ENCODE measurements at regions of chr15 and their contacts with region 1.

Region 1: DNA sequence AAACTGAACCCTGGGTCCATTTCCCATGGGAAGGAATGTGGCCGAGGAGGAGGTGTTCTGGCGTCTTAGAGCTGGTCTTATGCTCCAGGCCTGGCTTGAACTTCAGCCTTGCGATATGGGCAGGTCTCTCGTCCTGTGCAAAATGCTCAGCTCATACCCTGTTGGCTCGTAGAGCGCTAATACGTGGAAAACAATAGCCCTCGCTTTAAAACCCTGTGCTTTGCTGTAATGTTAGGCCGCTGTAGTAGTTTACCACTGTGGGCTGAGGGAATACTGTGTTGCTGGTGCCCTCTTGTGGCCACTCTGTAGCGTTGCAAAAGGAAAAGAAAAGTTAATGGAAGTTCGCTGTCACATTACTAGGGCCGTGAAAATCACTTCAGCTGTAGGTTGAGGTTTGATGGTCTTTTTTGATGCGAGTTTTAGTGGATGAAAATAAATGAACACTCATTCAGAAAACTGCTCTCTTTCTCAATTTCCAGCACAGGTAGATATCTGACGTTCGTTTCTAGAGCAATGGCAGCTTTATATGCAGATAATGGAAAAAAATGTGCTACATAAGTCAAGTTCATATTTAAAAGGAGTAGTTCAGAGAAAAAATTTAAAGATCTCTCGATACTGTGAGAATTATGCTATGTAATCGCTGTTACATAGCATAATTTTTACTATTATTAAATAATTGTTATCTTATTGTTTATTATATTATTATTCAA is 92.9 kb downstream of the MCTP2 start:
- DNase-seq: peak; percentile 64
- CTCF ChIP-seq: peak; percentile 83

Region 2: DNA sequence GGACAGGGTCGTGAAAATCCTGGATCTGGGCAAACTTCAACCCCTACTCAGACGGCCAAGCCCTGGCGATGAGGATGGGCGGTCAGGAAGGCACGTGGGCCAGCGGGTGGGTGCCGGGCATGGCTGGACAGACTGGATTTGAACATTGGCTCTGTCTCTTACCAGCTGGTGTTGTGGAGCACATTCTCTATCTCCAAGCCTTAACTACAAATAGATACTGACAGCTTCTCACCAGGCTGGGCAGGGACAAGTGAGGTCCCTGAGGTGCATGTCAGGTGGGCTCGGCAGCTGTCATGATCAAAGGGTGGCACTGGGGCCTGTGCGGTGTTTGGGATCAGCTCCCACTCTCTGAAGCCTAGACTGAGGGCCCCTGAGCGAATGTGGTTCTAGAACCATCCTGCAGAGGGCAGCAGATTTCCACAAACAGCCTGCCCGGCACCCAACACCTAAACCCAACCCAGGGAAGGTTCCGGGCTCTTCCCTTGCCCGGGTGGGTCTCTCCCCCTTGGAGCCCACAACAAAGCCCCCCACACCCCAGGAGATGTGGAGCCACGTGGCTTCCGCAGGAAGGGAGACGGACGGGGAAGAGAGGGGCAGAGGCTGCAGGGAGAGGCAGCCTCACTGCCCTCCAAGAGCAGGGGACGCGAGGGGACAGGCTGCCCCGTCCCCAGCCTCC is 1293.7 kb before region 1 on chr15:
- CTCF ChIA-PET with region 1: interaction called, 13 read pairs
- POLR2A ChIA-PET with region 1: no interaction called
- DNase-seq: peak; percentile 87
- CTCF ChIP-seq: peak; percentile 81

Region 3: DNA sequence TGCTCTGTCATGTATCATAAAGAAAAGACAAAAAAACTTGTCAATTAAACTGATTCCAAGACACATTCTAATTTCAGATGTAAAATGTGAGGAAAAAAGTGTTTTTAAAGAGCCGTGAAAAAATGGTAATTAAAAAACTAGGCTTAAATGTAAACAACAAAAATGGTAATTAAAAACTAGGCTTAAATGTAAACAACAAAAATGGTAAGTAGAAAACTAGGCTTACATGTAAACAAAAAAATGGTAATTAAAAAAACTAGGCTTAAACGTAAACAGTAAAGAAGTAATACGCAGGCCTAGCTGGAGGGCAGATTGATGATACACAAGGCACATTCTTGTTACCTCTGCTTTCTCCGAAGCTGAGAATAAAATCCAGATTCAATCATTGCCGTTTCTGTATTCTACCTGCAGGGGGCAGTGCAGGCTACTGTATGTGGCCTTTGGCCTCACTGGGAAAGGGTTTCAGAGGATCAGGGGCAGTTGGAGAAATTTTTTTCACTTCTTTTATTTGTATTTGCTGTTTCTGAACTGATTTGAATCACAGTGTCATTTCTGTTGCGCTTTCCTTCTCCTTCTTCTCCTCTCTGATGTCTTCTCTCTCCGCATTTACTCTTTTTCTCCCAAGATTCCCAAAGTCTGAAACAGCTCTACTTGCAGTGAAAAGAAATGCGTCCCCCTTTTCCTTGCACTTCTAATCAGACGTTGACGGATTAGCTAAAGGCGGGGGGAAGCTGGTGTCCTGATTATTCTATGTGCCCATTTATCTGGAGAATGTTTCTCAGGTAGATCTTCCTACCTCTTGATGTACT is 160.1 kb before region 1 on chr15:
- CTCF ChIA-PET with region 1: interaction called, 316 read pairs
- POLR2A ChIA-PET with region 1: interaction called, 3 read pairs
- DNase-seq: peak; percentile 43
- CTCF ChIP-seq: peak; percentile 78

Region 4: DNA sequence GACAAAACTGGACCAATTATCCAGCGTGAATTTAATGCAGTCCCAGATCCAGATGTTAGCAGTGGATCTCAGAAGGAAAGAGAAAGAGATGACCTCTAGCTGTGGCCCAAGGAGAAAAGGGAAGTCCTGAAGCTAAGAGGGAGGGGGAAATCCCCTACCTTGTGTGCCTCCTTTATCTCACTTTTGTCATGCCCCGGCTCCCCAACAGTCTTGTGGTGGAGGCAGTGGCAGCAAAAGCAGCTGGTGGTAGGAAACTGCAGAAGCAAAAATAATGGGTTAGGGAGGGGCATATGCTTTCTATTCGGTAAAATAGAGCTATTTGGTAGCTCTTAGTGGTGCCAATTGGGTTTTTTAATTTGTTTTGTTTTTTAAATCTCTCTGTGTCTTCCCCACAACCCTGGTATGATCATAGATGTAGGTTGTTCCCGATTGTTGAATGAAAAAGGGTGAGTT is 36.5 kb before region 1 on chr15:
- CTCF ChIA-PET with region 1: interaction called, 36 read pairs
- POLR2A ChIA-PET with region 1: no interaction called
- DNase-seq: peak; percentile 56
- CTCF ChIP-seq: no peak

Region 5: DNA sequence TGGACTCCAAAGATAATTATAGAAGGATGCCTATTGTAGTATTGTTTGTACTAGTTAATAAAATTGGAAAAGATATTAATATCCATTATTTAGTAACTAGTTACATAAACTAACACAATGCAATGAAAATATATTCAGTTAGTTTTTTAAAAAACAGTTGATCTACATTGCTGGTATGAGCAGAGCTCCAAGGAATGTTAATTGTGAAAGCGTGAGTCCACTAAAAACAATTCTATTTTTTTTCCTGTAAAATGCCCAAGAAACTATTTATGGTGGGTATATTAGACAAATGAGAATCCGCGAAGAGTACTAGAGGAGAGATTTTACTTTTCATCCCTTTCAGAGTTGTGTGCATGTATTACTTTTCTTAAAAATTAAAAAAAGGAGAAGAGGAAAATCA is 11.3 kb after region 1 on chr15:
- CTCF ChIA-PET with region 1: interaction called, 60 read pairs
- POLR2A ChIA-PET with region 1: no interaction called
- DNase-seq: no peak
- CTCF ChIP-seq: no peak

Region 6: GRCh38 chr15:94638183-94638582 is 313.9 kb after region 1 on chr15:
- CTCF ChIA-PET with region 1: no interaction called
- POLR2A ChIA-PET with region 1: no interaction called
- DNase-seq: no peak
- CTCF ChIP-seq: no peak

Measured in GM10248 (cell line).